HEK293 (cell line): ENCODE measurements at regions of chr11 and their contacts with region 1.

Region 1: GRCh38 chr11:72430741-72431570 is 3.4 kb downstream of the CLPB start:
- H3K4me3 ChIP-seq: no peak overlapping the region
- H3K27ac ChIP-seq: no peak overlapping the region
- H3K4me1 ChIP-seq: no peaks in the 10 kb centered on the region
- CTCF ChIP-seq: peak; percentile 67; the same call in 1 of the 2 replicates

Region 2: DNA sequence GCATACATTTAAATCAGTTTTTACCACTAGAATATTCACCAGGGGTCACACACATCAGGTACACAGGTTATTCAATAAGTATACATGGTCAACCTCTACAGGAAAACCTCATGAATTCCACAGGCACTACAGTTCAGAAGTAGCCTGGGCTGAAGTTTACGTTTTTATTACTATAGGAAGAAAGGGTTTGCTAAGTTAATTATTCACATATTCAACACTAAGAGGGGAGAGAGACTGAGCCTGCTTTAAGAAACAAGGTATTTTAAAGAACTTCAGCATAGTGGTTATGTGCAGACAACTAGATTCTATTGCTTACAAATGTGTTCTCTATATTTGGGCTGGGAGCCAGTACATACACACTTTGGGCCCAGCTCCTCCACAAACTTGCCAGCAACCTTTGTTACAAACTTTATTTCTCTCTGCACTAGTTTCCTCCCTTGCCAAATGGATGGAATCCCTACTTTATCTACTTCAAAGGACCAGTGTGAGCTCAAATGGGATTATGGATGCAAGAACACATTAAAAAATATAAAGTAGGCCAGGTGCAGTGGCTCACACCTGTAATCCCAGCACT is 400.4 kb before region 1 on chr11:
- CTCF ChIA-PET with region 1: interaction called, 28 read pairs
- POLR2A ChIA-PET with region 1: interaction called, 3 read pairs
- H3K4me3 ChIP-seq: no peak overlapping the region
- H3K27ac ChIP-seq: no peak overlapping the region
- H3K4me1 ChIP-seq: no peaks in the 10 kb centered on the region
- CTCF ChIP-seq: no peak

Region 3: DNA sequence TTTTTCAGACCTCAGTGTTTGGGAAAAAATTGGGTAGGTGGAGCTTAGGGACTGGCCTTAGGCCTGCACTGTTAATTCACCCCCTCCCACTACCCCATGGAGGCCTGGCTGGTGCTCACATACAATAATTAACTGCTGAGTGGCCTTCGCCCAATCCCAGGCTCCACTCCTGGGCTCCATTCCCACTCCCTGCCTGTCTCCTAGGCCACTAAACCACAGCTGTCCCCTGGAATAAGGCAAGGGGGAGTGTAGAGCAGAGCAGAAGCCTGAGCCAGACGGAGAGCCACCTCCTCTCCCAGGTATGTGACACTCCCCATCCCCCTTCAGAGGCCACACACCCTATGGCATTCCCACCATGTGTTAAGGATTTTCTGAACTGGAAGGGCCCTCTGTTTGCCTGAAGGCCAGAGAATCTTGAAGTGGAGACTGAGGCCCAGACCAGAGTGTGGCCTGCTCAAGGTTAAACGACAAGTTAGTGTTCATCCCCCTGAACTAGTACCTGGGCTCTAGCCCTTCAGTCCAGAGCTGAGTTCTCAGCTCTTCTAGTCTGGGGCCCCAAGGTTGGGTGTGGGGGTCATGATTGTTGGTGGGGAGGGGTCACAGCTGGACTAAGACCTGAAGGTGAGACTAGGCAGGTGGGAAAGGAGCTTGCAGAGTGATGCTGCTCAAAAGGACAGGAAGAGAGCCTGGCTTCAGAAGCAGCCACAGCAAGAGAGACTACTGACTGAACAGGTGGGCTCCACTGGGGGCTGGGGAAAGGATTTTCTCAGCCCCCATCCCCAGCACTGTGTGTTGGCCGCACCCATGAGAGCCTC is 241.3 kb before region 1 on chr11:
- CTCF ChIA-PET with region 1: interaction called, 39 read pairs
- POLR2A ChIA-PET with region 1: no interaction called
- H3K4me3 ChIP-seq: no peak overlapping the region
- H3K27ac ChIP-seq: no peak overlapping the region
- H3K4me1 ChIP-seq: no peaks in the 10 kb centered on the region
- CTCF ChIP-seq: no peak

Region 4: DNA sequence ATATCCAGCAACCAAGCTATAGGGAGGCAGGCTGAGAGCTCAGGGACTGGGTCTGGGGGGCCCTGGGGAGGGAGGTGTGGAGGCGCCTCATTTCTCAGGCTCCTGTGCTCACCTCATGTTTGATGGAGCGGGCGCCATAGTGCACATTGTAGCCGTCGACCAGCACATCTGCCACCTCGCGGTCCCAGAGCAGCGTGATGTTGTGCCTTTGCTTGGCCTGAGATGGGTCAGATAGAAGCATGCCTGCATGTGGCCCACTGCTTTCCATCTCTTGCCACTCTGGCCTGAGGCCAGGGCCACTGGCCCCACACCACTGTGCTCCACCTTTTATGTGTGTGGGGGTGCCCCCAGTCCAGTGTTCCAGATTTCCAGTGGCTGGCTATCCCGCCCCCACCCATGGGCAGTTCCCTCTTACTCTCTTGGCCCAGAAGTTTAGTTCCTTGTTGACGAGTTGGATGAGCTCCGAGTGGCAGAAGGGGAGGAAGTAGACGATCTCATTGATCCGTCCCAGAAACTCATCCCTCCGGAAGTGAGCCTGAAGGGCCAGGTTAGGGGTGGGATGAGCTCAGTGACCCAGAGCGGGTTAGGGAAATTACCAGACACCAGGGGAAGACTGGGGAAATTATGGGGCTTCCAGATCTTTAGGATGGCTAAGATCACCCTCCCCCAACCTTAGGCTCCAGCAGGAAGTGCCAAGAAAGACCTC is 136.9 kb before region 1 on chr11:
- CTCF ChIA-PET with region 1: interaction called, 19 read pairs
- POLR2A ChIA-PET with region 1: interaction called, 4 read pairs
- H3K4me3 ChIP-seq: no peak overlapping the region
- H3K27ac ChIP-seq: no peak overlapping the region
- H3K4me1 ChIP-seq: no peaks in the 10 kb centered on the region
- CTCF ChIP-seq: no peak

Region 5: DNA sequence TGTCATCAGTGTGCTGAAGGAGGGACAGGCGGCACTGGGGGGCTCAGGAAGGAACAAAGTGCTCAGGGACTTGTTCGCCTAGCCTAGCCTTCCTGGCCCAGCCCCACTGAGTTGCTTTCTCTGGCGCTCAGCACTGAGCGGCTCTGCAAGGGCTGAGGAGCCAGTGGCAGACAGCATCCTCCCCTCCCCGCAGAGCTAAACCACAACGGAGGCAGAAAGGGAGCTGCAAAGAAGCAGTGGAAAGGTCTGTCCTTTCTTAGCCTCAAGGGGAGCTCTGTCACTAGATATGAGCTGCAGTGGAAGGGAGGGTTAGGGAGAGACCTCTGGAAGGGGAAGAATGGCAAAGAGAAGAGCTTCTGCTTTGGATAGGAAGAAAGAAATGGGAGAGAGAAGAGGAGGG is 97.3 kb before region 1 on chr11:
- CTCF ChIA-PET with region 1: interaction called, 15 read pairs
- POLR2A ChIA-PET with region 1: interaction called, 4 read pairs
- H3K4me3 ChIP-seq: no peak overlapping the region
- H3K27ac ChIP-seq: no peak overlapping the region
- H3K4me1 ChIP-seq: no peaks in the 10 kb centered on the region
- CTCF ChIP-seq: peak; percentile 27; the same call in 1 of the 2 replicates

Region 6: DNA sequence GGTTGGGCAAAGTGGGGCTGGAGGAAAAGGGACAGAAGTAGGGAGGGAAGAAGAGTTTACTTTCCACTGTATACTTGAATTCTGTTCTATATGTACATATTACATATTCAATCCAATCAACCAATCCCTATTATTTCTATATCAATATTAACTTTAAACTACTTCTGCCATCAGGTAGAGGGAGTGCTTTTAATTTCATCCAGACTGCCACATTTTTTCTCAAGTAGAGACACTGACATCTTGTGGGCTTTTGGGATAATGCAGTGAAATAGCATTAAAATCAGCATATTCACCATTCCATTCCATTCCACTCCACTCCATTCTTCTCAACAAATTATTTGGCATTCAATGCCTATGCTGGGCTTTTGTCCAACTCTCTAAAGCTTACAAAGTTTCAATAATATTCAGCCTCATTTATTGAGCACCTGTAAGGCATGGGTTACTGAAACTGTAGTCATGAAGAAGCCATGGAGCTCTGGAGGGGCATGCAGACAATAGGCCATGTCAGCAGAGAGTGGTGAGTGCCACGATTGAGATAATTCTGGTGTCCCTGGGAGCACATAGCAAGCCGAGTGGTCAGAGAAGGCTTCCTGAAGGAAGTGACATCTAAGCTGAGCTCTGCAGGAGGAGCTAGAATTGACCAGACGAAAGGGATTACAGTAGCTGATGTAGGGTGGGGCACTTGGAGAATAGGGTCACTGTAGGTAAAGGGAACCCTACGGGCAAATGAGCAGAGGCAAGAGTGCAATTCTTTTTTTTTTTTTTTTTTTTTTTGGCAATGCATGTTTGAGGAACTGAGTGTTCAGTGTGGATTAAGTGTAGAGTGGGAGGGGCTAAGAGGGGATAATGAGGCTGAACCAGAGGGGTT is 16.2 kb after region 1 on chr11:
- CTCF ChIA-PET with region 1: interaction called, 17 read pairs
- POLR2A ChIA-PET with region 1: no interaction called
- H3K4me3 ChIP-seq: no peak overlapping the region
- H3K27ac ChIP-seq: no peak overlapping the region
- H3K4me1 ChIP-seq: no peaks in the 10 kb centered on the region
- CTCF ChIP-seq: peak; percentile 42; the same call in 1 of the 2 replicates

Region 7: DNA sequence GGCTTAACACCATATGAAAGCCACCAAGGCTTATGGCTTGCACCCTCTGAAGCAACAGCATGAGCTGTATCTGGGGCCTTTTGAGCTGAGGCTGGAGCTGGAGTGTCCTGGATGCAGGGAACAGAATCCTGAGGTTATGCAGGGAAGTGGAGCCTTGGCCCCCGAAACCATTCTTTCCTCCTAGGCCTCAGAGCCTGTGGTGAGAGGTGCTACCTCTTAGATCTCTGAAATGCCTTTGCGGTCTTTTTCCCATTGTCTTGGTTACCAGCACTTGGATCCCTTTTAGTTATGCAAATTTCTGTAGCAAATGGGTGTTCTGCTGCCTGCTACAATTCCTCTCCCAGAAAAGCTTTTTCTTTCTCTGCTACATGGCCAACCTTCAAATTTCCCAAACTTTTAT is 76.1 kb after region 1 on chr11:
- CTCF ChIA-PET with region 1: no interaction called
- POLR2A ChIA-PET with region 1: no interaction called
- H3K4me3 ChIP-seq: no peak overlapping the region
- H3K27ac ChIP-seq: no peak overlapping the region
- H3K4me1 ChIP-seq: no peaks in the 10 kb centered on the region
- CTCF ChIP-seq: no peak

Region 8: GRCh38 chr11:72519220-72519881 is 88.4 kb after region 1 on chr11:
- CTCF ChIA-PET with region 1: no interaction called
- POLR2A ChIA-PET with region 1: no interaction called
- H3K4me3 ChIP-seq: no peak overlapping the region
- H3K27ac ChIP-seq: no peak overlapping the region
- H3K4me1 ChIP-seq: no peaks in the 10 kb centered on the region
- CTCF ChIP-seq: no peak

Region 9: GRCh38 chr11:72613977-72614376 is 183.0 kb after region 1 on chr11:
- CTCF ChIA-PET with region 1: no interaction called
- POLR2A ChIA-PET with region 1: no interaction called
- H3K4me3 ChIP-seq: no peak overlapping the region
- H3K27ac ChIP-seq: no peak overlapping the region
- H3K4me1 ChIP-seq: no peaks in the 10 kb centered on the region
- CTCF ChIP-seq: no peak